ENCODE measurements at regions of chr1 and their contacts with region 1.

Region 1: DNA sequence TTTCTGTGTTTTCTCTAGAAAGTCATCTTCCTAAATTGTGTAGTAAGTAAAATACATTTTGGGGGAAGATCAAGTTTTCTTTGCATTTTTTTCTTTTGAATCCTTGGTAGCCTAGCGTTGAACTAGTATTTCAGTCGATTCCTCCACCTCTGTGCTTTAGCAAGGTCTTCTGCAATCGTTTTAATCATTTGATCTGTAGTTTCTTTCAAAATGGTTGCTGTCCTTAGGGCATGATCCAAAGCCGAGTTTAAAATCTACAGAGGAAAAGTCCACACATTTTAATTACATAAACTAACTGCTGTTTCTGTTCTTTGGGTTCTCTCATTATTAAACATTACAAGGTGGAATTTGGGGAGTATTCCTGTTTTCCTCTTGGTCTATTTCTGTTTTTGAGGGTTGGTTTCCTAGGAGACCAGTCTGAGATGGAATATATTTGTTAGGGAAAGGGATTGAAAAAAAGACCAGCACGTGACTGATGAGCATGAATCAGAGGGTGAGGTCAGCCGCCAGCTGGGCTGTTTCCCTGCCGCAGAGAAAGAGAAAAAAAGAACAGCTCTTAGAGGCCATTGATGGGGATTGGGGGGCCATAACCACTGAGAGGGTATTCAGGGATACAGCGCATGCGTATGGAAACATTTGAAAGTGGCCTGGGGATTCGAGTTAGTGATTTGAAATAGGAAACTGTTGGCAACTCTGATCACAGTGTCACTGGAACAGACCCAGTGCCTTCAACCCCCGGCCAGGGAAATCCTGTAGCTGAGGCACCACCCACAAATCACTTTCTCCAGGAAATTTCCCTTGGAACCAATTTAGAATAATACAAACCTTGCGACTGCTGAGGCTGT is 40.6 kb downstream of the AKNAD1 start:
- DNase-seq: peak; percentile 58 to 95 (median 86)

Region 2: GRCh38 chr1:108746372-108747205 is 69.7 kb before region 1 on chr1 and contains the start of gene STXBP3:
- intact Hi-C with region 1: loop called (anchors 5 kb)
- DNase-seq: peak; percentile 97 to 100 (median 99)

Region 3: DNA sequence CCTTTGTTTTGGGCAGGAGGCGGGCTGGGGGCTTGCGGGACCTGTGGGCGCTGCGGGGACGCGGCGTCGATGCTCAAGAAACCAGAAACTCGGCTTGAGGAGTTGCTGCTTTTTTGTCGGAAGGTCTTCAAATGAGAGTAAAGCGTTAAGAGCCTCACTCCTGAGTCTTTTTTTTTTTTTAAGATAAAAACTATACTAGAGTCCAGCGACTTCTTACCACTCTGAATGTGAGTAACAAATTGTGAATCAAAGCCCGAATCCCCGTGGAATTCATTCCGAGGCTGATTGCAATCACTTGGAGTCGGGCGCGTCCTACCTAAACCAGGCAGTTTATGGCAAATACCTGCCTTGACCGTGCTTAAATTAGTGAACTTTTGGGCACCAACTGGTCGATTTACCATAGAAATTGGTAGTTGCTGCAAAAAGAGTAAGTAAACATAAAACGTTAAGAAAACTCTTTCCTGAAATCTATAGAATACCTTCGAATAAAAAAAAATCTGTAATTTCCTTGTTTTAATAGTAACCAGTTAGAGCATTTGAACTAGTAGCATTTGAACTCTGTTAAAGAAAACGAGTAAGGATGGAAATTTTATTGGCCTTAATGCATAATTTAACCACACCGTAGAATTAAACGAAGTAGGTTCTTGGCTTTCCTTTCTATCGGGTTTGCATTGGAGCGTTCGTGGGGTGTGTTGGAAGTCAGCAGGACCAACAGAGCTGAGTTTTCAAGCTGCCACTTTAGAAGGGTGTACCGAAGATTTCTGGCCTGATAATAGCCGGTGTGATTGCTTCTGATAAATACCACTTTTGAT is 61.3 kb after region 1 on chr1:
- intact Hi-C with region 1: loop called (anchors 2 kb)
- DNase-seq: peak in 18 of 42 donors; percentile 14 to 74 (median 32)

Measured in head of caudate nucleus (tissue), 42 donors.